Activated naive CD4-positive, alpha-beta T cell treated with anti-CD3 and anti-CD28 coated beads for 36 hours (primary cell): ENCODE measurements at regions of chr7 and their contacts with region 1.

Region 1: GRCh38 chr7:8404079-8404478 is 29.3 kb upstream of the NXPH1 start:
- DNase-seq: no peak
- H3K4me3 Mint-ChIP-seq: no peak overlapping the region
- H3K27ac Mint-ChIP-seq: no peak overlapping the region
- H3K4me1 Mint-ChIP-seq: no peaks in the 10 kb centered on the region
- H3K27me3 Mint-ChIP-seq: peaks cover 22% of the 10 kb centered on the region

Region 2: DNA sequence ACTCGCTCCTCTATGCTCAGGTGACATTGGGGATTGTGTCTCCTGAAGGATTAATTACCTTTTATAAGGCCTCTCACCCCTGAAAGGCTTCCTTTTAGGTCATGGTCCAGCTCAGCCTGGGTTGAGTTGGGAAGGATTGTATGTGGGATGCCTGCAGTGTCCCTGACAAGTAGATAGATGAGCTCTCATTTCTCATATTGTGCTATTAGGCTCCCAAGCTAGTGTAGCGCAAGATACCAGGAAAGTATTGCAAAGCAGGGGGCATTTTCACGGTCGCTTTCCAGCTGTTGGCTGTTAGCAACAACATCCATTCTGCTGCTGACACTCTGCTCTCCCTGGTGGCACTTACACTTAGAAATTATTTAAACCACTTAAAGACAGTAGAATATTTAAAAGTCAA is 61.3 kb after region 1 on chr7:
- CTCF ChIA-PET with region 1: no interaction called
- intact Hi-C with region 1: no loop called
- DNase-seq: no peak
- H3K4me3 Mint-ChIP-seq: no peak overlapping the region
- H3K27ac Mint-ChIP-seq: no peak overlapping the region
- H3K4me1 Mint-ChIP-seq: no peaks in the 10 kb centered on the region
- H3K27me3 Mint-ChIP-seq: peaks cover 6% of the 10 kb centered on the region

Region 3: DNA sequence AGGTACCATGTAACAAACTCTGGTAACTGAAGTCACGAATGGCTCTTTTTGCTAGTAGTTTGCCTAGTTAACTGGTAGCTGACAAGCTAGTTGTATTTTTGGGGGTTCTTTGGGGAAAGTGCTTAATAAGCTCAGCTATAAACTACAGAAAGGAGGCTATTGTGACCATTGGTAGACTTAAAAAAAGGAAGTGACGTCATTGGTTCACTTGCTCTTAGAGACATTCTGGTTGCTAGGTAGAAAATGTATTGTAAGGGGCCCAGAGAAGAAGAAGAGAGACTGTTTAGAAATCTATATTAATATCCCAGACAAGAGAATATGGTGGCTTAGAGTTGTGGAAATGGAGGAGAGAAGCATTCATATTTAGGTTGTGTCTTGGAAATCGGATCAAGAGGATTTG is 132.4 kb after region 1 on chr7:
- CTCF ChIA-PET with region 1: no interaction called
- intact Hi-C with region 1: loop called (anchors 10 kb)
- DNase-seq: no peak
- H3K4me3 Mint-ChIP-seq: no peak overlapping the region
- H3K27ac Mint-ChIP-seq: no peak overlapping the region
- H3K4me1 Mint-ChIP-seq: no peaks in the 10 kb centered on the region
- H3K27me3 Mint-ChIP-seq: no peaks in the 10 kb centered on the region